Activated CD4-positive, alpha-beta T cell treated with anti-CD3 and anti-CD28 coated beads for 36 hours (primary cell): ENCODE measurements at regions of chr17 and their contacts with region 1.

Region 1: DNA sequence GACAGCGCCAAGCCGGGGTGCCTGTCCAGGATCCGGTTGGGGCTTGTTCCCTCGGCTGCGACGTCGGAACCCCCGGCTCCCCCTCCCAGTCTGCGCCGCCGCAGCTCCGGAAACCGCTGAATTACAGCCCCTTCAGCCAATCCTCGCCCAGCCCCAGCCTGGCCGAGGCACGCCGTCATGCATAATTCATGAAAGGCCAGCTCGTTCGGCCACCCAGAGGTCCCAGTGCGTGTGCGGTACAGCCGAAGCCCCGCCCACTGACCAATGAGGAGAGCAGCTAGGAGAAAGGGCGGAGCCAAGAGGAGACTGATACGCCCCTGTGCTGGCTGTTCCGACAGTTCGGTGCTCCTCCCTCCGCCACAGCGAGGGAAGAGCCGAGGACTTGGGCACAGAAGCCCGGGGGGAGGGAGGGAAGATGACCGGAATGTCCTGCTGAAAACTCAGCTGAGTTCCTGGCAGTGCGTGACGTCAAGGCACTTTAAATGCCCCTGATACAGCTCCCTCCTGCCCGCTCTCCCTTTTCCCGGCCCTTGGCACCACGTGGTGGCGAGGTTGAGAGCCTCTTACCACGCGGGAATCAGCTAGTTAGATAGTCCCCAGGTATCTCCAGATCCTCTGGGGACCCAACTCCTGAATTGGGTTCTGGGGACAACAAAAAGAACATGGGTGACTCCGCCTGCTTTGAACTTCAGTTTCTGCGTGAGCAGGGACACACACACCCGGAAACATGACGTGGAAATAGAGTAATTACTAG is at the start of gene STAT3:
- DNase-seq: peak; percentile 100
- ATAC-seq: peak; percentile 88
- H3K4me3 Mint-ChIP-seq: peak within 1 kb of the TSS; percentile 95
- H3K27ac Mint-ChIP-seq: peak within 1 kb of the TSS; percentile 100
- H3K4me1 Mint-ChIP-seq: peaks cover 57% of the 10 kb centered on the region
- H3K27me3 Mint-ChIP-seq: no peaks in the 10 kb centered on the region
- total RNA-seq, gene STAT3: 332 to 345 TPM

Region 2: DNA sequence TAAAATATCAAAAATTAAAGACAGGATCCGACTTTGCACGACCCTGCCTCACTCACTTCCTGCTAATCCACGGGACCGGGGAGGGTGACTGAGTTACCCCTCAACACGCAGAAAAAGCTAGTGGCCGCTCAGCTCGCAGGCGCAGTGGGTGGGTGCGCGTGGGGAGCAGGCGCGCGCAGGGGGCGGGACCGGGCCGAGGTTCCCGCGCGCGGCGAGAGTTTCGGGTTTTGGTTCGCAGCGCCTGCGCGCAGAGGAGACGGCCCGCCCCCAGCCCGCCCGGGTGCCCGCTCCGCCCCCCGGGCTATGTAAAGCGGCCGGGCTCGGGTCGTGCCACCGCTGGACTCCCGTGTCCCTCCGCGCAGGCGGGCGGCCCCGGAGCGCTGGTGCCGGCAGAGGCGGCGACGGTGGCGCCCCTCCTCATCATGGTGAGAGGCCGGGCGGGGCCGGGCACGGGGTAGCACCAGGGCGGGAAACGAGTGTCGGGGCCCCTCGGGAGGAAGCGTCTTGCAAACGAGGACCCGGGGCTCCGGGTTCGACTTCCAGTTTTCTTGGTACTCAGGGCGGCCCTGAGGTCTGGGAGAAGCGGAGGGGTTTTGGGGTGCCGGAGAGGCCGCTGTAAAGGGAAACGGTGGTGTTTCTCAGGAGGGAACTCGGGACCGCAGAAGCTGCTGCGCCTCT is 422.0 kb before region 1 on chr17 and contains the start of gene CNP:
- CTCF ChIA-PET with region 1: no interaction called
- POLR2A ChIA-PET with region 1: no interaction called
- intact Hi-C with region 1: loop called in 1 of 2 experiments (anchors 2 kb)
- DNase-seq: peak; percentile 95
- ATAC-seq: peak; percentile 75
- H3K4me3 Mint-ChIP-seq: peak within 1 kb of the TSS; percentile 79
- H3K27ac Mint-ChIP-seq: peak within 1 kb of the TSS; percentile 82
- H3K4me1 Mint-ChIP-seq: peaks cover 36% of the 10 kb centered on the region
- H3K27me3 Mint-ChIP-seq: no peaks in the 10 kb centered on the region
- total RNA-seq, gene CNP: 55.1 to 77.0 TPM

Region 3: GRCh38 chr17:42266918-42267778 is 121.4 kb before region 1 on chr17:
- CTCF ChIA-PET with region 1: no interaction called
- POLR2A ChIA-PET with region 1: interaction called, 5 read pairs
- intact Hi-C with region 1: loop called (anchors 2 to 5 kb)
- DNase-seq: peak; percentile 70
- ATAC-seq: peak; percentile 77
- H3K4me3 Mint-ChIP-seq: peak overlapping the region; percentile 47
- H3K27ac Mint-ChIP-seq: peak overlapping the region; percentile 98
- H3K4me1 Mint-ChIP-seq: peaks cover 61% of the 10 kb centered on the region
- H3K27me3 Mint-ChIP-seq: no peaks in the 10 kb centered on the region

Region 4: DNA sequence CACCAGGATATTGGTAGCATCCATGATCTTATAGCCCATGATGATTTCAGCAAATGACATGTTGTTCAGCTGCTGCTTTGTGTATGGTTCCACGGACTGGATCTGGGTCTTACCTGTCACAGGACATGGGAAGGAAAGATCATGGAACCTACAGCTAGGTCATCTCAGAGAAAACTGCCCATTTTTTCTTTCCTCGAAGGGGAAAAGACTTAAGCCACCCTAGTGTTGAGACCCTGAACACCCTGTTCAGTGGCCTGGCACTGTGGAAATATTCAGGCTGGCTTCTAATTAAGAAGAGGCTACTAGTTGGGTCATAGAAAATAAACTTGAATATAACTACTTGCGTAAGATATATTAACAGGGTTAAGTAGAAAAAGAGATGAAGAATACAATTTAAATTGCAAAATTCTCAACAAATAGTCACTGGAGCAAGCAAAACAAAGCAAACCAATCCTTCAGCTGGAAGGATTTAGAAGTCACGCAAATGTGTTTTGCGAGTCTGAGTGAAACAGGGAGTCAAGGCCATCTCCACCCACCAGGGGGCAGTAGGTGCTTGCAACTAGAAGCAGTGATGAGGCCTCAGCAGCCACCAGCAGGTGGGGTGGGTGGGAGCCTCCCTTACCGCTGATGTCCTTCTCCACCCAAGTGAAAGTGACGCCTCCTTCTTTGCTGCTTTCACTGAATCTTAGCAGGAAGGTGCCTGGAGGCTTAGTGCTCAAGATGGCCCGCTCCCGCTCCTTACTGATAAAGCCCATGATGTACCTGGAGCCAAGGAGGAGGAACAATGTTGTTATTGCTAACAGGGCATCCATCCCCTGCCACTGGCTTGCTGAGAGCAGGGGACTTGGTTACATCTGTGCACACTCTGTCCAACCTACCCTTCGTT is 65.9 kb before region 1 on chr17:
- CTCF ChIA-PET with region 1: interaction called, 26 read pairs
- POLR2A ChIA-PET with region 1: interaction called, 5 read pairs
- intact Hi-C with region 1: loop called (anchors 1 to 5 kb)
- DNase-seq: peak; percentile 97
- ATAC-seq: peak; percentile 87
- H3K4me3 Mint-ChIP-seq: peak overlapping the region; percentile 37
- H3K27ac Mint-ChIP-seq: peak overlapping the region; percentile 56
- H3K4me1 Mint-ChIP-seq: peaks cover 45% of the 10 kb centered on the region
- H3K27me3 Mint-ChIP-seq: no peaks in the 10 kb centered on the region

Region 5: GRCh38 chr17:42361781-42362186 is 26.8 kb before region 1 on chr17:
- CTCF ChIA-PET with region 1: interaction called, 10 read pairs
- POLR2A ChIA-PET with region 1: interaction called, 16 read pairs
- intact Hi-C with region 1: loop called (anchors 1 kb)
- DNase-seq: peak; percentile 77
- ATAC-seq: peak; percentile 92
- H3K4me3 Mint-ChIP-seq: peak overlapping the region; percentile 42
- H3K27ac Mint-ChIP-seq: peak overlapping the region; percentile 83
- H3K4me1 Mint-ChIP-seq: peaks cover 82% of the 10 kb centered on the region
- H3K27me3 Mint-ChIP-seq: no peaks in the 10 kb centered on the region

Region 6: DNA sequence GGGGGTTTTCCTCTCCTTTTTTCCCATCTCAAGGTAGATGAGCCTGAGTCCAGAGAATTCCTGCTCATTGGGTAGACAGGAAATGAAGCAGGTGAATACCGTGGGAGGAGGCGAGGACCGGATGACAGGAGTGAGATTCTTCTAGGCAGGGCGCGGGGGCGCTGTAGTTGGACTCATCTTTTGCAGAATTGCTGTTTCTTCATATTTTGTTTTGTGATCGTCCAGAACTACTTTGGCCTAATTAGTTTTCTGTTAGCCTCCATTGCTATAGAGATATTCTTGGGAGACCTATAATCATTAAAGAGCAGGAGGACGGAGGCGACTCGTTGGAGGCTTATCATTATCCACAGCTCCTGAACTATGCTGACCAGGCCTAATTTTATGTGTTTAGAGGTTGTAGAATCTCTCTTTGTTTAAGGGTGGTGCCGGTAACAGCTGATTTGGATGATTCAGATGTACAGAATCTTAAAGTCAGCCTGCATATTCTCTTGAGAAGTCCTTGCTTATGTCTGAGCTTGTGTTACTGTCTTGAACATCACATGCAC is 70.8 kb after region 1 on chr17:
- CTCF ChIA-PET with region 1: interaction called, 3 read pairs
- POLR2A ChIA-PET with region 1: interaction called, 3 read pairs
- intact Hi-C with region 1: loop called in 1 of 2 experiments (anchors 2 kb)
- DNase-seq: peak; percentile 68
- ATAC-seq: no peak
- H3K4me3 Mint-ChIP-seq: peak overlapping the region; percentile 86
- H3K27ac Mint-ChIP-seq: peak overlapping the region; percentile 91
- H3K4me1 Mint-ChIP-seq: peaks cover 46% of the 10 kb centered on the region
- H3K27me3 Mint-ChIP-seq: no peaks in the 10 kb centered on the region